ENCODE measurements at regions of chr5 and their contacts with region 1.

Region 1: DNA sequence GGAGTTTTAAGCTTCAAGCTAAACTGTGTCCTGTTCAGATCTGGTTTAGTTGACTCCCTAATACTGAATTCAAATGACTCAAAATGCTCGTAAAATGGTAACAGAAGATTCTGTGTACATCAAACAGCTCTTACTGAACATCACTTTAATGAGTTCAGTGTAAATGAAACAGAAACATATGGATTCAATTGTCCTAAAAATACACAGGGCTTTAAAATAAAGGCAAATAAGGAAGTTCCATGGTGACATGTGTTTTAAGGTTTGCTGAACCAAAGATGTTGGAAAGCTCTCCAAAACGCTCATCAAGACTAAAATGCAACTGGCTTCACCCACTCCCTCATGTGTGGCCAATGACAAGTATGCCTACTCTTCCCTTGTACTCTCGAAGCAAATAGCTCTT is 340.0 kb upstream of the PIK3R1 start:
- DNase-seq: peak; percentile 39
- H3K4me3 ChIP-seq: no peak overlapping the region
- H3K27me3 ChIP-seq: no peaks in the 10 kb centered on the region
- CTCF ChIP-seq: no peak

Region 2: GRCh38 chr5:67686746-67687145 is 188.9 kb before region 1 on chr5:
- CTCF ChIA-PET with region 1: no interaction called
- POLR2A ChIA-PET with region 1: no interaction called
- DNase-seq: no peak
- H3K4me3 ChIP-seq: no peak overlapping the region
- H3K27me3 ChIP-seq: no peaks in the 10 kb centered on the region
- CTCF ChIP-seq: no peak

Region 3: GRCh38 chr5:68041293-68041692 is 165.7 kb after region 1 on chr5:
- CTCF ChIA-PET with region 1: no interaction called
- POLR2A ChIA-PET with region 1: interaction called, 10 read pairs
- DNase-seq: no peak
- H3K4me3 ChIP-seq: no peak overlapping the region
- H3K27me3 ChIP-seq: no peaks in the 10 kb centered on the region
- CTCF ChIP-seq: no peak

Measured in BJ (cell line).